Aorta (tissue), 5 donors: ENCODE measurements at regions of chr4 and their contacts with region 1.

Region 1: DNA sequence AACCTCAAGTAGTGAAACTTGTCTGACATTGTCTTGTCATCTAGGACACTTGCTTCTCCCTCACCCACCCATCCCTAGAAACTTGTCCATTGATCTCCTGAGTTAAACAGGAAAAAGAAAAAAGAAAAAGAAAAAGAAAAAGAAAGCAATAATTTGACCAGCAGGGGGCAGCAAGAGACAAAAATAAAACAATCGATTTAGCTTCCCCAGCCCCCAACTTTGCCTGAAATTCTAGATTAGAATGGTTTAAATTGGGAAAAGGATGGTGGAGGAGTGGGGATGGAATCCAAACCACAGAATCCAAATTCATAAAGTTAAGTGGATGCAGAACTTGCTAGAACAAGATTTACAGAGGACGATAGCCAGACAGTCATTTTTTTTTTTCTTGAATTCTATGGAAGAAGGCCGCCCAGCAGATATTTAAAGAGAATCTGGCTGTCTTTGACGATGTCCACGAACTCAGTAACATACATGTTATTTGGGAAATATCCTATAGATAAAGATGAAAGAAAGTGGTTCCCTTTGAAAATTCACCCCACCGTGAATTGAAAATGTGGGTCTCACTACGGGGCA is 282.9 kb downstream of the USP46 start:
- DNase-seq: no peak
- ATAC-seq: no peak
- H3K4me3 ChIP-seq: no peak overlapping the region
- H3K27ac ChIP-seq: no peak overlapping the region
- H3K4me1 ChIP-seq: no peaks in the 10 kb centered on the region
- H3K27me3 ChIP-seq: no peaks in the 10 kb centered on the region

Region 2: GRCh38 chr4:52142816-52143215 is 233.4 kb before region 1 on chr4:
- intact Hi-C with region 1: no loop called
- DNase-seq: no peak
- ATAC-seq: no peak
- H3K4me3 ChIP-seq: no peak overlapping the region
- H3K27ac ChIP-seq: no peak overlapping the region
- H3K4me1 ChIP-seq: no peaks in the 10 kb centered on the region
- H3K27me3 ChIP-seq: peaks cover 0 to 2% of the 10 kb centered on the region in 2 donors

Region 3: DNA sequence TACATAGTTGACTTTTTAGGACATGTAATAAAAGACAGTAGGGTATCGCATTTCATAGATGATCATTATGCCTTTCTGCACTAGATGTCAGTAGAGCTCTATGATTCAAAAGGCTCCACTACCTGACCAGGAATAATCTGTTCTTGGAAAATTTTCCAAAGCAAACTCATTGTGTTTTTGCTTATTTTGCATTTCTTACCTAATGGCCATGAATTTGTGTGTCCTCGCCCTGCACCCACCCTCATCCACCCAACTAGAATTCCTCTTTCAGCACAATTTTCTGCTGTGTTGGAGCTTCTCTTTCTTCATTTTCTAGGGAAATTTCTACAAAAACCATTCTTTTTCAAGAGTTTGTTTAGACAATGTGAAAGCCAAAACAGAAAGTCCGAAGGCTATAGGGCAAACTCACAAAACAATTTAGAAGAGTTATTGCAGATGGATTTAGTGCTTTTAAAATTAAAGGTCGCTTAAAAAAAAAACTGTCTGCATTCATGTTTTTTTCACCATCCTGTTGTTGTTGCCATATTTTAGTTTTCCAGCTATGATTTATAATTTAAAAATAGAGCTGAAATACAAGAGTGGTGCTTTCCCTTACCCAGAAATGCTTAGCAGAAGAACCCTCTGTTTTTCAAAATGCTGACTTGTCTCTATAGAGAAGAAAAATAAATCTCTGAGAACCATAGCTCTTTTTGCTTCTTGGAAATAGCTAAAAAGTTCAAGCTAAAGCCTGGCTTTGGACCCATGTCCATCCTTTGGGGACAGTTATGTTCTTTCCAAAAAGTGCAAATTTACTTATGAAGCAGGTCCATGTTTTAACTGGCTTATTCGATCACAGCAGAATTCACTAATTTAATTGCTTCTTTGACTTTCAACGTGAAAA is 141.4 kb before region 1 on chr4:
- intact Hi-C with region 1: loop called (anchors 10 kb)
- DNase-seq: no peak
- ATAC-seq: peak; percentile 84
- H3K4me3 ChIP-seq: peak overlapping the region in 1 of 2 donors; percentile 41
- H3K27ac ChIP-seq: no peak overlapping the region
- H3K4me1 ChIP-seq: no peaks in the 10 kb centered on the region
- H3K27me3 ChIP-seq: no peaks in the 10 kb centered on the region